Posterior vena cava (tissue), 2 donors: ENCODE measurements at regions of chr12 and their contacts with region 1.

Region 1: GRCh38 chr12:93578221-93578620 is 5.7 kb downstream of the SOCS2 start:
- DNase-seq: no peak

Region 2: DNA sequence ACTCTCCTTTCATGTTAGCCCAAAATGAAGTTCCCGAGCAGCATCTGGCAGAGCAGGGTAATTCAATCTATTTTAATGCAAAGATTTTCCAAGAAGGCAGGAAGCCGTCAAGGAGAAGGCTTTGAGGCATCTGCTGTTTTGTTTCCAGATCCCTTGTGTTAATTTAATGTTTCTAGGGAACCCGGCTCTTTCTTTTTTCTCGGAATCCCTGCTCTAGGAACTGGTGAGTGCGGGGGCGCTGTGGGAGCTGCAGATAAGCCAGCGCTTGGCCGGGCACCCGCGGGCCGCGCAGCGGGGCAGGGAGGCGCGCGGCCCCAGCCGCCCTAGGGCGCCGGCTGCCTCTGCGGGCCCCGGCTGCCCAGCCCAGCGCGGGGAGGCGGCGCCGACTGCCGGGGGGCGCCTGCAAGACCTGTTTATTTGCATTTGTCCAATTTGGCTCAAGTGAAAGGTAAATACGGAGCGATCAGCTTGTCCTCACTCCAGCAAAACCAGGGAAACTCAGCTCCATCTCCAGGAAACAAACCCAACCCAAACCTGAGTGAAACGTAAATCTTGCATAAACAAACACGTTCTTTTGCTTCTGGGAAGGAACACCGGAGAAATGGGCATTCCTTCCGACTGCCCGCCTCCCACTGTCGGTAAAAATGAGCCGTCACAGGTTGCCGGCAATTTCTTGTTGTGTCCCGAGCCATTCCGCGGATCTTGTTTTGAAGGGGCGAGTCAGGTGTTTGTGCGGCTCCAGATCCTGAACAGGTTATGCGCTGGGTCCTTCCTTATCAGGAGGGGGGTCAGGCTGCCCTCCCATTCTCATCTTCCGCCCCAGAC is 164.1 kb after region 1 on chr12:
- intact Hi-C with region 1: loop called (anchors 2 to 10 kb)
- DNase-seq: peak; percentile 91